Brain microvascular endothelial cell (primary cell): ENCODE measurements at regions of chr20 and their contacts with region 1.

Region 1: DNA sequence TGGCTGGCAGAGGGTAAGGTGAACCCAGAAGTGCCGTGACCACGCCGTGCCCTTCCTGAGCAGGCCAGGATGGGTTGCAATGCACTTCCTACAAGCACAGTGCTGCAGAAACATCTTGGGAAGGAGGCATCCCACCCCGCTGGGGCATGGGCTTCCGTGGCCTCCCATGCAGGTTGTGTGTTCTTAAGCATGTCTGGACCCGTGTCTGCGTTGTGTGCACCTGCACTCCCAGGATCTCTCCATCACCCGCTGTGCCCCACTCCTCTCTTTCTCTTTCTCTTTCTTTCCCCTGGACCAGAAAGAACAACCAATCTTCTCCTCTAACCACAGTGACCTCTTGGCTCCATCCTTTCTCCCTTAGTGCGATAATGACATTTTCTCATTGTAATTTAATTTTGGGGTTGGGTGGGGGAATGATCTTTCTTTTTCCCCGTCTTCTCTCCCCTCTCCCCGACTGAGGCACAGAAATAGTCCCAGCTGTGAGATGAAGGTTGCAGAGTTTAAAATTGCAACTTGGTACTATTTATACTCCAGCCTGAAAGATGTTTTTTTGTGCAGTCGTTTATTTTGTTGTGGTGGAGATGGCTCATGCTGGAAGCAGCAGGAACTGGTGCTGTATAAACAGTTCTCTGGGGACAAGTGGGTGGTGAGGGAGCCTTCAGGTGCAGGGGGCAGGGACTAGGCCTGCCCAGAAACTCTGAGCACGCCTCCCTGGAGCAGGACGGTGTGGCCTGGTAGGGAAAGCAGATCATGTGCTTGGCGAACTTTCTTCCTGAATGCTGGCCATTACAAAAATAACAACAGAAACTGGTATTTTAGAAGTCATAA is 20.5 kb downstream of the BCAS4 start:
- DNase-seq: peak; percentile 66
- H3K4me3 ChIP-seq: no peak overlapping the region
- H3K27ac ChIP-seq: no peak overlapping the region
- H3K27me3 ChIP-seq: no peaks in the 10 kb centered on the region
- CTCF ChIP-seq: no peak

Region 2: DNA sequence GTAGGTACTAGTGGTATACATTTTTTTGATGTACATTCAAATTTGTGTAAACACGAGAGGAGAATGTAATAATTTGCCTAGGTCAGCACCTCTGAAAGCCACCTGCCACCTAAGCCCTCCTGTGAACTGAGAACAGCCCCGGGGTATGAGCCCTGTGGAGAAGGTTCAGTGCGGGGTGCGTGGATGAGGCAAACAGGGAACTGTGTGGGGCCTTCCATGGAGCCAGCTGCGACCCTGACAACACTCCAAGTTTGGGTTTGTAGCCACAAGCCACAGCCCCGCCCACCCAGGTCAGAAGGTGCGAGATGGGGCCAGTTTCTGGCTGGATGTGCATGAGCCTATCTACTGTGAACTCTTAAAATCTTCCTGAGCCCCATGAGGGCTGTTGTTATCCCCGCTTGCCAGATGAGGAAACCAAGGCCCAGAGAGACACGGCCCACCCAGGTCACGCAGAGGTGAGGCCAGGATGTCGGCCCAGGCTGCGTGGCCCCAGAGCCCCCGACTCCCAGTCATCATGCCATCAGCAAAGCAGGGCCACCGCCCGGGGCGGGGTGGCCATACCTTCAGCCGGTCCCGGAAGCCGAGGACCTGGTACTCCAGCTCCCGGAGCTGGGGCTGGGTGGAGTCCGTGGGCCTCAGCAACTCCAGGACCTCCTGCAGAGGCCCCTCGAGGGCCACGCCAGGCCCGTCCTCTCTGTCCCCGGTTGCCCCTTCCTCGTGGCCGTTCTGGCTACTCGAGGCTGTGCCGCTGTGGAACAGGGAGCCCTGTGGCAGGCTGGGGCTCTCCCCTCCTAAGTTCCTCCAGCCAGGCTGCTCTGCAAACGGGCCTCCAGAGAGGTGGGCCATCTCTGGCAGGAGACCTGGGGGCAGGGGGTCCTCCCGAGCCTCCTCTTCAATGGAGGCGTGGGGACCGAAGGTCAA is 213.6 kb before region 1 on chr20:
- in situ Hi-C with region 1: no loop called
- DNase-seq: no peak
- H3K4me3 ChIP-seq: no peak overlapping the region
- H3K27ac ChIP-seq: no peak overlapping the region
- H3K27me3 ChIP-seq: no peaks in the 10 kb centered on the region
- CTCF ChIP-seq: no peak

Region 3: GRCh38 chr20:50913690-50914375 is 98.5 kb after region 1 on chr20:
- in situ Hi-C with region 1: loop called (anchors 25 kb)
- DNase-seq: peak; percentile 78
- H3K4me3 ChIP-seq: no peak overlapping the region
- H3K27ac ChIP-seq: peak overlapping the region; percentile 44
- H3K27me3 ChIP-seq: no peaks in the 10 kb centered on the region
- CTCF ChIP-seq: no peak

Region 4: GRCh38 chr20:51372176-51372803 is 556.9 kb after region 1 on chr20:
- in situ Hi-C with region 1: no loop called
- DNase-seq: peak; percentile 69
- H3K4me3 ChIP-seq: no peak overlapping the region
- H3K27ac ChIP-seq: peak overlapping the region; percentile 85
- H3K27me3 ChIP-seq: no peaks in the 10 kb centered on the region
- CTCF ChIP-seq: peak; percentile 90